AG04450 (cell line): ENCODE measurements at regions of chr5 and their contacts with region 1.

Region 1: DNA sequence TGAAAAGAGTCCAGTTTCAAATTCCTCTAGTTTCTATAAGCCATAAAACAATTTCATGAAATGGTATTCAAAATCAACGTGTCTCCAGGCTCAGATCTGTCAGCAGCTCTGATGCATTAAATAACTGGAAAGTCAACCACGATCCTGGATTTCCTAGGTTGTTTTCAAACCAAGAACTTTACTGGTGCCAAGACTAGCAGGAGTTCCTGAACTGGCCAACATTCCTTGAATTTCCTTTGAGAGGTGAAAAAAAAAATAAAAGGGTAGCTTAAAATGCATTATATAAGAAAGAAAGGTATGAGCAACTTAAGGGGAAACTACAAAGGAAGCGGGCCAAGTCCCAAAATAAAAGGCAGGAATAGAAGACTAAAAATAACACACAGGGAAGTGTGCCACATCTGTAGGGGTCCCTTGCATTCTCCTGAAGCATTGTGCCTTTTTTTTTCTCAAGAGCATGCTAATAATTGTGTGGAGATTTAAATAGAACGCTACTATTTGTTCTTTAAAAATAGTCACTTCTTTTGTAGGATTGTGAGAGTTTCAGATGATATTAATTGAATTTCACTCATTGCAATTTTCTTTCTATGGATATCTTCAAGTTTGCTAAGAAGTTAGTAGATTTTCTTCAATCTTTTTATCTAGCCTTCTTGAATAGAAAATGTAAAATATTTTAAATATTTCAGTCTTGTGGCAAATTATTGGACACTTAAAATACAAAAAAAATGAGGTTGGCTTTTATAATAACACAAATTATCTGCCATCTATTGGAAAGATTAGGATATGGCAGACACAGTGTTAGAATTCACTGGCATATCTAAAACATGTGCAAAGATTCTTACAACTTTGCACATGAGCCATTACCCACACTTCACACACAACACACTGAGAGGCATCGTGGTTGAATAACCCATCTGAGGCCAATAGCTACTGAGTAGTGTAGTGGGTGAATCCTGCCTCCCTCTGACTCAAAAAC is 15.3 kb downstream of the ESM1 start:
- DNase-seq: no peak
- H3K4me3 ChIP-seq: no peak overlapping the region
- H3K27ac ChIP-seq: no peak overlapping the region
- H3K27me3 ChIP-seq: peaks cover 11% of the 10 kb centered on the region
- CTCF ChIP-seq: no peak

Region 2: GRCh38 chr5:54985301-54986268 is 15.4 kb after region 1 on chr5 and contains the start of gene ESM1:
- CTCF ChIA-PET with region 1: no interaction called
- POLR2A ChIA-PET with region 1: no interaction called
- DNase-seq: peak; percentile 37
- H3K4me3 ChIP-seq: peak within 1 kb of the TSS; percentile 46
- H3K27ac ChIP-seq: peak within 1 kb of the TSS; percentile 58
- H3K27me3 ChIP-seq: no peaks in the 10 kb centered on the region
- CTCF ChIP-seq: no peak
- polyA plus RNA-seq, gene ESM1: 0.27 and 0.35 TPM in 2 replicates

Region 3: GRCh38 chr5:55146543-55147151 is 176.5 kb after region 1 on chr5:
- CTCF ChIA-PET with region 1: interaction called, 11 read pairs
- POLR2A ChIA-PET with region 1: no interaction called
- DNase-seq: peak; percentile 67
- H3K4me3 ChIP-seq: no peak overlapping the region
- H3K27ac ChIP-seq: no peak overlapping the region
- H3K27me3 ChIP-seq: peaks cover 12% of the 10 kb centered on the region
- CTCF ChIP-seq: peak; percentile 99